ENCODE measurements at regions of chr20 and their contacts with region 1.

Region 1: DNA sequence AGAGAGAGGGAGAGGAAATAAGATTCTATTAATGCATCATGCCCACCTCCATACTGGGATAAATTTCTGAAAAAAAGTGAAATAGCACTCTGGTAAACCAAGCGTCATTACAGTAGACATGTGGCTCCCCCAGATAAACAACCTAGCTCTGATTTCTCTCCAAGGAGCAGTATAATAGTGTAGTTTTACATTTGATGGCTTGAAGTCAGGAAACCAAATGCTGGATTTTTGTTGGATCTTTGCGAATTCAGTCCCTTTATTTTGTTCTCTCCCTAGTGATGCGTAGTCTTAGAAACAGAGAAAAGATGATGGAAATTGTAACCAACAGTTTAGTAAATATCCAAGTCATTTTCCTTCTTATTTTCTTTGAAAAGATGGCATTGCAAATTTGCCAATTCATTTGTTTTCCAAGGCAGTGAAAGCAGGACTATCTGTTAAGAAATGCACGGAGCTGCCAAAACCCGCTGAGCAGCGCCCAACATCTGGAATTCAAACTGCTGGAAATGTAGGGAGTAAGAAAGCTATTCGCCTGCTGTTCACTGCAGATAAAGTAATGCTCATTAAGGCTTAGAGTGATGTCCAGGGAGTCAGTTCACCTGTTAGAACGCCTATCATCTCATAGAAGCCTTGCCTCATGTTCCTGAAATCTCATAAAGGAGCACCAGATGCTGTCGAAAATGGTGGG is 85.7 kb upstream of the DOK5 start:
- DNase-seq: peak; percentile 22
- ATAC-seq: no peak

Region 2: GRCh38 chr20:54335299-54335698 is 54.4 kb before region 1 on chr20:
- intact Hi-C with region 1: loop called (anchors 5 kb)
- DNase-seq: no peak
- ATAC-seq: no peak

Region 3: DNA sequence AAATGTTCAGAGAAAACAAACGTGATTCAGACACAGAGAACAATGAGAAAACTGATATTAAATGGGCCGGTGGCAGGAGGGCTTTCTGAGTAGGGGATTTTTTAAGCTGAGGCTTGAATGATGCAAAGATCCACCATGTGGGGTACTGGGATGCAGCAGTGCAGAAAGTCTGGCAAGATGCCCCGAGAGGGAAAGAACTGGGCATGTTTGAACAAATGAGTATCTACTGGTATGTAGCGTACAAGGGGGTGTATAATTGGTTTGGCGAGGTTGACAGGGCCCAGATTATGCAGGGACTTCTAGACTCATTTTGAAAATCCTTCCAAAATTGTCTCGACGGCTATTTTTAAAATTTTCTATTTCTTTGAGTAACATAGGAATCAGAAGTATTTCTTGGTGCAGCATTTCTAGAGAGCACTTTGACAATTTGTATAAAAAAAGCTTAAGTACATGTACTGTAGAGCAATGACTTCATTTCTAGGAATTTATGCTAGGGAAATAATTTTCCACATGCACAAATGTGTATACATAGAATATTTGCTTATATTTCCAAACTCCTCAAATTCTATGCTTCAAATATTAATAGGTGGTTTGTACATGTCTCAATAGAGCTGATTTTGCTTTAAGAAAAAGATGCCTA is 34.0 kb before region 1 on chr20:
- intact Hi-C with region 1: no loop called
- DNase-seq: no peak
- ATAC-seq: no peak

Region 4: DNA sequence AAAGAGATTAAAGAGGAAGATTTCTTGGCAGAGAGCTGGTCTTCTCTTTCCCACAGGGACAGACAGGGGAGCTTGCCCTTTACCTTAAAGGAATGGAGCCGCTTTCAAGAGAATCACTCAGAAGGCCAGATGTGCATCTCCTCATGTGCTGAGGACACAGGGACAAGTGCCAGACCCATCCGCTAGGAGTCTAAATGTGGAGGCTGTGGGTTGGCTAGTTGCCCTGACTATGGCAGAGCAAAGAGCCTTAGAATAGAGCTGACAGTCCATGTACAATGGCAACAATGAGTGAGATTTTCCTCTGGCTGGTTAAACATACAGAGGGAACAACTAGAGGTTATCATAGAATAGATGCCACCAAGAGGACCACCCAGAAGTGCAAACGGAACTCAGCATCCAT is 78.3 kb after region 1 on chr20:
- intact Hi-C with region 1: no loop called
- DNase-seq: no peak
- ATAC-seq: no peak

Region 5: DNA sequence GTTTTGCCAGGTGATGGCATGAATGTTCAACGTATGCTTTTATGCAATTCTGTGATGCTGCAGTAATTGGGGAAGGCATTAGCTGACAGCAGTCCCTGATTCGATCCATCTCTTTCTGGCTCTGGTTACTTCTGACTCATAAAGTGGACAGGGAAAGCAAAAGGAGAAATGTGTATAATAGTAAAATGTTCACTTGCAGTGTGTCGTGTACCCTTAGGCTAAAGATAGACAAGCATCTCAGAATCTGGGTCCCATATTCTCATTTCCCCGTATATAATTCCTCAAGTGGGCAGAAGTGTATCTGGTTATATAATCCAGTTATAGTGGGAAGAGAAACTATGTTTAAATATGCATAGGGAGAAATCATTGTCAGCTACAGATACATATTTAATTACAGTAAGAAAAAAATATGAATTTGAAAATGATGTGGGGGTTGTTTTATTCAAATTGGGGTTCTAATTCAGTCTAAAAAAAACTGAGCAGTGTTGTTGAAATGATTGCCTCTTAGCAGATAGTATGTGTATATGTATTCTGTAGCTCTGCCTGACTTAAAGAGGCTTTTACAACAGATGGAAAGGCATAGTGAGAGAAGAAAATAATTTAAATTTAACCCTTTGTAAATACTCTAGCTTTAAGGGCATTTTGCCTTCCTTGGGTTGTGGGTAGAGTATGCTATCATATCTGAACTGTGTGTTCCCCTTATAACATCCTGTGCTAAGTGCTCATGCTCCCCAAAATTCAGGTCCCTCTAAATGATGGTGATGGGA is 126.3 kb after region 1 on chr20:
- intact Hi-C with region 1: no loop called
- DNase-seq: no peak
- ATAC-seq: no peak

Region 6: DNA sequence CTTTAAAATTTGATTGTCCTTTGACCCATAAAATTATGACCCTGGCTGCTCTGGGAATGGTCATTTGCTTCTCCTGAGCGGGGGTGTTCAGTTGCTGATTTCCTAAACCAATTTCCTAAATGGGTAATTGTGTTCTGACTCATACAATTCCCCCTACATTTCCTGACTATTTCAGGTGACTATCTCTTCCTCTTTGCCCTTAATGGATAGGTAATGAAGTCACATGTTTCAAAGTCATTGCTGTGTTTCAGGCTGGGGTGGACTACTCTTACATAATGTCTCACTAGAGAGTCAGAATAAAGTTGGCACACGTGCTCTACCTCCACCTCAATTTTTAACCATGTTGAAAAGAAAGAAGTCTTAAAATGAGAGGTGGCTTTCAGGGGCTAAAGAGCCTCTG is 195.5 kb after region 1 on chr20:
- intact Hi-C with region 1: no loop called
- DNase-seq: no peak
- ATAC-seq: no peak

Measured in Right ventricle myocardium superior (tissue), 1 donor.